ENCODE measurements at regions of chr15 and their contacts with region 1.

Region 1: GRCh38 chr15:88620995-88621772 is at the start of gene AEN:
- DNase-seq: peak; percentile 98
- H3K4me3 ChIP-seq: peak within 1 kb of the TSS; percentile 84 to 95 (median 88)
- H3K27ac ChIP-seq: peak within 1 kb of the TSS; percentile 82 to 94 (median 83)
- H3K4me1 ChIP-seq: peaks cover 26 to 51% (median 46%) of the 10 kb centered on the region in 4 donors
- H3K27me3 ChIP-seq: peaks cover 0 to 9% (median 0%) of the 10 kb centered on the region in 4 donors
- CTCF ChIP-seq: peak in 2 of 3 experiments; percentile 23 to 30
- EP300 ChIP-seq: no peak
- POLR2A ChIP-seq: peak; percentile 33
- total RNA-seq, gene AEN: 13.3 to 29.0 (median 23.4) TPM

Region 2: GRCh38 chr15:88467073-88467934 is 153.9 kb before region 1 on chr15 and contains the starts of genes MRPL46 and MRPS11:
- intact Hi-C with region 1: loop called (anchors 5 kb)
- DNase-seq: peak; percentile 96
- H3K4me3 ChIP-seq: peak within 1 kb of the TSS; percentile 76 to 88 (median 84)
- H3K27ac ChIP-seq: peak within 1 kb of the TSS; percentile 81 to 88 (median 86)
- H3K4me1 ChIP-seq: peaks cover 28 to 35% (median 34%) of the 10 kb centered on the region in 4 donors
- H3K27me3 ChIP-seq: no peaks in the 10 kb centered on the region
- CTCF ChIP-seq: no peak
- EP300 ChIP-seq: no peak
- POLR2A ChIP-seq: no peak
- total RNA-seq, gene MRPL46: 14.5 to 27.8 (median 25.1) TPM
- total RNA-seq, gene MRPS11: 25.7 to 44.9 (median 34.2) TPM

Region 3: DNA sequence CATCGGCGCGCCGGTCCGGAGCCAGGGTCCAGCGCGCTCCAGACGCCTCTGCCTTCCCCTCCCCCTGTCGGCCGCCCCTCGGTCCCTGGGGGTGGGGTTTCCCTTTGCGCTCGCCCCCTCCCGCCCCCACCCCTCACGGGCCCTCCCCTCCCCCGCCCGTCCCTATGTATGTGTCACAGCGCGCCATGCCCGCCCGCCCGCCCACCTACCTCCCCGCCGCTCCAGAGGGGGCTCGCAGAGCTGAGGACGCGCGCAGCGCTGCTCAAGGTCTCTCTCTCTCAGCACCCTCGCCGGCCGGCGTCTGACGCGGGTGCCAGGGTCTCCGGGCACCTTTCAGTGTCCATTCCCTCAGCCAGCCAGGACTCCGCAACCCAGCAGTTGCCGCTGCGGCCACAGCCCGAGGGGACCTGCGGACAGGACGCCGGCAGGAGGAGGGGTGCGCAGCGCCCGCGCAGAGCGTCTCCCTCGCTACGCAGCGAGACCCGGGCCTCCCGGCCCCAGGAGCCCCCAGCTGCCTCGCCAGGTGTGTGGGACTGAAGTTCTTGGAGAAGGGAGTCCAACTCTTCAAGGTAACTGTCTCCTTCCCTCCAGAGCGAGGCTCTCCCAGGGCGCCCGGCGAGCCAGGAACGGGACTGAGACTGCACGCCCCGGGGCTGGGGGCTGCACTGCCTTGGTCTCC is 182.2 kb after region 1 on chr15 and contains the start of gene ACAN:
- intact Hi-C with region 1: no loop called
- DNase-seq: no peak
- H3K4me3 ChIP-seq: peak within 1 kb of the TSS in 3 of 4 donors; percentile 8 to 22 (median 18)
- H3K27ac ChIP-seq: no peak within 1 kb of the TSS
- H3K4me1 ChIP-seq: peaks cover 0 to 13% (median 10%) of the 10 kb centered on the region in 4 donors
- H3K27me3 ChIP-seq: peaks cover 0 to 94% (median 25%) of the 10 kb centered on the region in 4 donors
- CTCF ChIP-seq: no peak
- EP300 ChIP-seq: no peak
- POLR2A ChIP-seq: no peak
- total RNA-seq, gene ACAN: under 0.01 to 0.11 (median 0.06) TPM in 3 of 4 donors, not detected in the other

Region 4: DNA sequence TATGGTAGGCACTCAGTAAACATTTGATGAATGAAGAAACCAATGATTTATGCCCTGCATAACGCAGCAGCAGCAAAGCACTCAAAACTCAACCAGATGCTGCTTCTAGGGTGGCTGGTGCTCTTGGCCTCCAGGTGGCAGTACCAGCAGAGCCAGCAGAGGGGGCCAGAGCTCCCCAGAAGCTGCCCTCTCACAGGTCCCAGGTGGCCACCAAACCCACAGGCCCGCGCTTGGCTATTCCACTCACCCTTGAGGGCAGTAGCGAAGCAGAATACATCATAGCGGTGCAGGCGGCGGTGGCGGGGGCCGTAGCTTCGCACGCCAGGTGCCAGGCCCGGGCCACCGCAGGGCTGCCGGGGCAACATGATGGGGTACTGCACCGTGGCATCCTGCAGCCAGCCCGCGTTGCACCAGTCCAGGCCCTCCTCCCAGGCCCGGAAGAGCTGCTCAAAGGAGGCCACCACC is 257.6 kb after region 1 on chr15:
- intact Hi-C with region 1: no loop called
- DNase-seq: no peak
- H3K4me3 ChIP-seq: no peak overlapping the region
- H3K27ac ChIP-seq: no peak overlapping the region
- H3K4me1 ChIP-seq: peaks cover 0 to 4% (median 2%) of the 10 kb centered on the region in 4 donors
- H3K27me3 ChIP-seq: peaks cover 0 to 10% (median 0%) of the 10 kb centered on the region in 4 donors
- CTCF ChIP-seq: peak; percentile 41 to 68 (median 42)
- EP300 ChIP-seq: no peak
- POLR2A ChIP-seq: no peak

Region 5: GRCh38 chr15:88897456-88898194 is 276.4 kb after region 1 on chr15:
- intact Hi-C with region 1: loop called (anchors 5 kb)
- DNase-seq: no peak
- H3K4me3 ChIP-seq: peak overlapping the region in 3 of 4 donors; percentile 10 to 34 (median 11)
- H3K27ac ChIP-seq: peak overlapping the region; percentile 63 to 81 (median 74)
- H3K4me1 ChIP-seq: peaks cover 47 to 64% (median 54%) of the 10 kb centered on the region in 4 donors
- H3K27me3 ChIP-seq: peaks cover 0 to 31% (median 8%) of the 10 kb centered on the region in 4 donors
- CTCF ChIP-seq: peak; percentile 55 to 73 (median 72)
- EP300 ChIP-seq: no peak
- POLR2A ChIP-seq: no peak